ENCODE measurements at regions of chr11 and their contacts with region 1.

Region 1: DNA sequence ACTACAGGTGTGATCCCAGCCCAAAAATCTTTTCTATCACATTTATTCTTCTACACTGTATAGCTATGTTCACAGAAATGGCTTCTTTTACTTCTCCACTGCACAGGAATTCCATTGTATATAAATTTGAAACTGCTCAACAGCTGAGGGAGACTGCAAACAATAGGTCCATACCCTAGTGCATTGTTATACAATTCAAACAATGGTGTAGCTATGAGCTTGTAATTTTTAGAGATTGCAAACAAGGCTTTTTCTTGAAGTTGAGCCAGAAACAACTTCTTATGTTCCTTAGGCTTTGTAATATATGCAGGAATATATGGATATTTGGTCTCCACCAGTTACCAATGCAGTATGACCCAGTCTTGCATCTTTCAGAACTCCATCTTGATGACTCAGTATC is 19.5 kb upstream of the SIK3 start:
- DNase-seq: no peak

Region 2: GRCh38 chr11:116871248-116871647 is 246.4 kb before region 1 on chr11:
- intact Hi-C with region 1: no loop called
- DNase-seq: no peak

Region 3: DNA sequence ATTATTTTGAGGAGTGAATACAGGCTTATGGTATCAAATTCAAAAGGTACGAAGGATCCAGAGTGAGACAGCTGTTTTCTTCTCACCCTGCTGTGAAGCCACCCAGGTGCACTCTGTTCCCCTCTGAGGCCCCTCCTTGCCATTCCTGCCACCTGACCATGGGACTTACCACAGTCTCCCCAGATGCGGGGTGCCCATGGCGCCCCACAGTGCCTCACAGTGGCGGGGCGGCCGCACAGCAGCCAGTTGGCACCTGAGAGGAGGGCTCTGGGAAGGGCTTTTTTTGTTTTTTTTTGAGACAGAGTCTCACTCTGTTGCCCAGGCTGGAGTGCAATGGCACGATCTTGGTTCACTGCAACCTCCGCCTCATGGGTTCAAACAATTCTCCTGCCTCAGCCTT is 361.7 kb after region 1 on chr11:
- intact Hi-C with region 1: no loop called
- DNase-seq: no peak

Region 4: GRCh38 chr11:117497206-117497951 is 379.7 kb after region 1 on chr11:
- intact Hi-C with region 1: loop called in 1 of 2 experiments (anchors 5 kb)
- DNase-seq: no peak

Measured in posterior vena cava (tissue), 2 donors.